HCT116 (cell line): ENCODE measurements at regions of chr1 and their contacts with region 1.

Region 1: DNA sequence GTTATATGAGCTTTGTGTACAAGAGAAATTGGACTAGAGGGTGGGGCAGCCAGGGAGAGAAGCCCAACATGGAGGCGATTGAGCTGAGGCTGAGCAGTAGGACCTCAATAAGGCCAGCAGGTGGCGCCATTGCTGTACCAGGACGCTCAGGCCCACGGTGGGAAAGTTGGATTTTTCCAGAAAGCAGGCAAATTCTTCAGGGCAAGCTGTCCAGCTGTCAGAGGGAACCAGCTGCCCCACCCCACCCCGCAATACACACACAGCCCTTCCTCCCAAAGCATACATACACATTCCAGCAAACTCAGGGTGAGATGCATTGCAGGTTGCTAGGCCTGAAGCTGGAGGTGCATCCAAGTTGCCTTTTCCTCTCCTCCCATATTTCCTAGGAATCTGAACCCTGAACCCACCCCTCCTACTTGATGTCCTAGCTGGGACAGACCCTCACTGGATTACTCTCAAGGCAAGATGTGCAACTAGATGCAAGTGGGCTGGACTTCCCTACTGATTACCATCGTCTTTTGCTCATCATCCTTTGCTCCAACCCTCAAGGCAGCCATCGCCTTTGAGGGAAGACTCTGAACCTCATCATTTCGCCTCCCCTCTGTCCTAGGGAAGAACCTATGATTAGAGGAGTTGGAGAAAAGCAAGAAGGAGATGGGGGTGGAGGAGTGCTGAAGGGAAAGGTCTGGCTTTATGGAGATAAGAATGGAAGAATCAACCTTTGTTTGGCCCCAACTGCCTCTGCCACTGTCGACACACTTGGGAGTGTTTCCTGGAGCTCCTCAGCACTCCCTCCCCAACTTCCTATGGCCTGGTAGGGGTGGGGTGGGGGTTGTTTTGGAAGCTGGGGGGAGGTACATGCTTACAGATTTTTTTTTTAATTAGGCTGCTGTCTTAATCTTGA is 25.5 kb downstream of the CD34 start:
- DNase-seq: peak; percentile 63
- ATAC-seq: peak; percentile 98
- H3K4me3 ChIP-seq: no peak overlapping the region
- H3K27ac ChIP-seq: no peak overlapping the region
- H3K4me1 ChIP-seq: peaks cover 0 to 8% of the 10 kb centered on the region in 2 experiments; a peak in 1 of 4 replicates
- H3K27me3 ChIP-seq: no peaks in the 10 kb centered on the region
- CTCF ChIP-seq: peak; percentile 87 to 98 (median 92)
- POLR2A ChIP-seq: no peak
- RAD21 ChIP-seq: peak; percentile 92

Region 2: GRCh38 chr1:206992790-206993189 is 892.6 kb before region 1 on chr1:
- CTCF ChIA-PET with region 1: no interaction called
- POLR2A ChIA-PET with region 1: no interaction called
- RAD21 ChIA-PET with region 1: no interaction called
- intact Hi-C with region 1: no loop called
- DNase-seq: no peak
- ATAC-seq: no peak
- H3K4me3 ChIP-seq: no peak overlapping the region
- H3K27ac ChIP-seq: no peak overlapping the region
- H3K4me1 ChIP-seq: no peaks in the 10 kb centered on the region
- H3K27me3 ChIP-seq: no peaks in the 10 kb centered on the region
- CTCF ChIP-seq: no peak
- POLR2A ChIP-seq: no peak
- RAD21 ChIP-seq: no peak

Region 3: DNA sequence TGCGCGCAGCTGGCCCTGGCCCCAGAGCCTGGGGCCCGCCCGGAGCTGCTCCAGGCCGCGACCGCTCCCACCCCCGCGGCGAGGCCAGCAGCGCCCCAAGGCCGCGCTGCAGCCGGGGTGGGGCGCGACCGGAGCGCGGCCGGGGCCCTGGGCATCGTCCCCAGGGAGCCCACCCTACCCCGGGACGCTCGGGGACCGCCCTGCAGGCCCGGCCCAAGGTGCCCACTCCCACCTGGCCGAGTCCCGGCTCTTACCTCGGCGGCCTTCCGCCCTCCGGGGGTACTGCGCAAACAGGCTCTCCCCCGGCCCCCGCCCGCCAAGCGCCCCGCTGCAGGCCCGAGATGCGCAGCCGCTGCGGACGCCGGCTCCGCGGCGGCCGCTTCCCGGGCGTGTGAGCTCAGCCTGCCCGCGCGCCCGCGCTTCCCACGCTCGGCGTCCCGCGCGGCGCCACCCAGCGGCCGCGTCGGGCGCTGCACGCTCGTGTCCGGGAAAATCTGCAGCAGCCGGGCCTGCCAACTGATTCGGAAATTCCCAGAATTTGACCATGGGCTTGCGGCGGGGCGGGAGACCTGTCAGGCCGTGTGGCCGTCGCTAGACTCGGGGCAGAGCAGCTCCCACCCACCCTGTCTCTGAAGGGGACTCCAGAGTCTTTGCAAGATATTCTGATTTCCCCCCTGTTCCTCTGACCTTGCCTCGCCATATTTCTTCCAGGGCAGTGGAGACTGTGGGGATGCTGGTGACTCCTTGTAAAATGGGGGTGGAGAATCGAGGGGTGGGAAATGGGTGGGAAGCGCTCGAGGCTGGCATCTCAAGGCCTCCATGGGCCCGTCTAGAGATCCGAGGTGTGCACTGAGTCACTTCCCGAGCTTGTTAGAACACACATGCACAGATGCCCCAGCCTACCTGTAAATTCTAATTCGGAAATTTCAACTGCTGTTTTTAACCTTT is 16.3 kb before region 1 on chr1:
- CTCF ChIA-PET with region 1: interaction called, 29 read pairs
- POLR2A ChIA-PET with region 1: interaction called, 3 read pairs
- RAD21 ChIA-PET with region 1: no interaction called
- intact Hi-C with region 1: loop called (anchors 1 kb)
- DNase-seq: peak; percentile 29
- ATAC-seq: peak; percentile 85
- H3K4me3 ChIP-seq: peak overlapping the region; percentile 74 to 92
- H3K27ac ChIP-seq: peak overlapping the region; percentile 49; the same call in 1 of the 2 replicates
- H3K4me1 ChIP-seq: peaks cover 2 to 20% of the 10 kb centered on the region in 2 experiments; a peak in 2 of 4 replicates
- H3K27me3 ChIP-seq: no peaks in the 10 kb centered on the region
- CTCF ChIP-seq: peak; percentile 51 to 71 (median 54); a peak in 5 of 6 replicates
- POLR2A ChIP-seq: peak; percentile 32
- RAD21 ChIP-seq: peak; percentile 44

Region 4: GRCh38 chr1:207963427-207964194 is 78.2 kb after region 1 on chr1:
- CTCF ChIA-PET with region 1: interaction called, 63 read pairs
- POLR2A ChIA-PET with region 1: no interaction called
- RAD21 ChIA-PET with region 1: interaction called, 5 to 7 read pairs
- intact Hi-C with region 1: loop called (anchors 1 kb)
- DNase-seq: peak; percentile 35
- ATAC-seq: peak; percentile 92
- H3K4me3 ChIP-seq: peak overlapping the region; percentile 37 to 56
- H3K27ac ChIP-seq: peak overlapping the region; percentile 56; the same call in 1 of the 2 replicates
- H3K4me1 ChIP-seq: peaks cover 7 to 13% of the 10 kb centered on the region in 2 experiments; a peak in 3 of 4 replicates
- H3K27me3 ChIP-seq: no peaks in the 10 kb centered on the region
- CTCF ChIP-seq: peak; percentile 91 to 94 (median 94)
- POLR2A ChIP-seq: peak; percentile 66
- RAD21 ChIP-seq: peak; percentile 97

Region 5: GRCh38 chr1:208093754-208094719 is 208.7 kb after region 1 on chr1:
- CTCF ChIA-PET with region 1: no interaction called
- POLR2A ChIA-PET with region 1: no interaction called
- RAD21 ChIA-PET with region 1: no interaction called
- intact Hi-C with region 1: loop called (anchors 5 kb)
- DNase-seq: peak; percentile 31
- ATAC-seq: peak; percentile 95
- H3K4me3 ChIP-seq: no peak overlapping the region
- H3K27ac ChIP-seq: no peak overlapping the region
- H3K4me1 ChIP-seq: no peaks in the 10 kb centered on the region
- H3K27me3 ChIP-seq: no peaks in the 10 kb centered on the region
- CTCF ChIP-seq: peak; percentile 67 to 94 (median 85); a peak in 5 of 6 replicates
- POLR2A ChIP-seq: no peak
- RAD21 ChIP-seq: peak; percentile 60